ENCODE measurements at regions of chr4 and their contacts with region 1.

Region 1: GRCh38 chr4:140208921-140209320 is 54.9 kb upstream of the MAML3 start:
- DNase-seq: no peak
- H3K4me3 ChIP-seq: no peak overlapping the region
- CTCF ChIP-seq: no peak

Region 2: GRCh38 chr4:140163029-140163810 is 45.7 kb before region 1 on chr4:
- in situ Hi-C with region 1: loop called (anchors 5 kb)
- DNase-seq: no peak
- H3K4me3 ChIP-seq: no peak overlapping the region
- CTCF ChIP-seq: no peak

Measured in astrocyte of the cerebellum (primary cell).